ENCODE measurements at regions of chr11 and their contacts with region 1.

Region 1: DNA sequence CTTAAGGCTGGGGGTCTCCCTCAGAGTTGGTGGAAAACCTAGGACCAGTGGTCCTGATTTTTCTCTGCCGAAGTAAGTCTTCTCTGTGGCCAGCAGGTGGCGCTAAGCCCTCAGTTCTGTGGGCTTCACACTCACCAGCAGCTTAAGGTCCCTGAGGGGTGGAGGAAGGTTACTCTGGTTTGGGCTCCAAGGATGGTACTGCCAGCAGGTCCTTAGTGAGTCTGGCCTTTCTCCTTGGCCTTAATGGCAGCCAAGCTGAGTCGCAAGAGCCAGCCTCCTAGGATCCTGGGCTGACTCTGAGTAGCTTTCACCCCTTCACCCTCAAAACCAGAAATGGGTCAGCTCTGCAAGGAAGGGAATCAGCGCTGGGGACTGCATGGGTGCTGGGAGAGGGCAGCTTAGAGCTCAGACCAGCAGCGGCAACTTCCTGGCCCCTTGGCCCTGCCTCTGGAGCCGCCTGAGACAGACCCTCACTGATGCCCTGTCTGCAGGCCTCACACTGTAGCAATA is 4.4 kb downstream of the KCNJ11 start:
- DNase-seq: peak; percentile 67 to 70 (median 70)
- H3K4me3 ChIP-seq: no peak overlapping the region
- H3K4me3 Mint-ChIP-seq: no peak overlapping the region
- H3K27ac ChIP-seq: no peak overlapping the region
- H3K27ac Mint-ChIP-seq: peak overlapping the region in 1 of 7 donors; percentile 78
- H3K4me1 ChIP-seq: no peaks in the 10 kb centered on the region
- H3K4me1 Mint-ChIP-seq: no peaks in the 10 kb centered on the region
- H3K27me3 ChIP-seq: no peaks in the 10 kb centered on the region
- H3K27me3 Mint-ChIP-seq: no peaks in the 10 kb centered on the region

Region 2: DNA sequence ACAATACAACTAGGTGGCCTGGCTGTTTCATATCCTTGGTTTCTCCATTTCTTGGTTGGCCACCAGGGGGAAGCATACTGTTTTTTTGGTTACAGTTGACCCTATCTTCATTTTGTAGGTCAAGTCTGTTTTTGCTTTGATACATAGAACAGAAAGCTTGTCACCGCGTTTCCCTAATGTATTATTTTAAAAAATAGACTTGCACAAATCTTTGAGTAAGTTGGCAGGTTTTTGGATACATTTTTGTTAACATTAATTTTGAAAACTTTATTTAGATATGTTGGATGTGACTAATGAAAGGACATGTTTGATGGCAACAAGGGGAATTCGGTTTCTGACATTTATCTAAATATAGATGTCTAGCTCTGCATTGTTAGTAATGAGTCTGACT is 29.5 kb before region 1 on chr11:
- CTCF ChIA-PET with region 1: interaction called, 21 read pairs
- POLR2A ChIA-PET with region 1: interaction called, 4 read pairs
- intact Hi-C with region 1: loop called (anchors 2 kb)
- DNase-seq: peak; percentile 62 to 71 (median 65)
- H3K4me3 ChIP-seq: no peak overlapping the region
- H3K4me3 Mint-ChIP-seq: peak overlapping the region in 7 of 8 donors; percentile 74 to 98 (median 94)
- H3K27ac ChIP-seq: no peak overlapping the region
- H3K27ac Mint-ChIP-seq: peak overlapping the region in 5 of 7 donors; percentile 22 to 76 (median 64)
- H3K4me1 ChIP-seq: peaks cover 29% of the 10 kb centered on the region
- H3K4me1 Mint-ChIP-seq: peaks cover 17 to 44% (median 28%) of the 10 kb centered on the region in 4 donors
- H3K27me3 ChIP-seq: no peaks in the 10 kb centered on the region
- H3K27me3 Mint-ChIP-seq: peaks cover 0 to 1% of the 10 kb centered on the region in 2 donors

Region 3: GRCh38 chr11:17366495-17366894 is 17.6 kb before region 1 on chr11:
- CTCF ChIA-PET with region 1: interaction called, 15 read pairs
- POLR2A ChIA-PET with region 1: no interaction called
- intact Hi-C with region 1: no loop called
- DNase-seq: no peak
- H3K4me3 ChIP-seq: no peak overlapping the region
- H3K4me3 Mint-ChIP-seq: no peak overlapping the region
- H3K27ac ChIP-seq: no peak overlapping the region
- H3K27ac Mint-ChIP-seq: no peak overlapping the region
- H3K4me1 ChIP-seq: no peaks in the 10 kb centered on the region
- H3K4me1 Mint-ChIP-seq: no peaks in the 10 kb centered on the region
- H3K27me3 ChIP-seq: no peaks in the 10 kb centered on the region
- H3K27me3 Mint-ChIP-seq: no peaks in the 10 kb centered on the region

Region 4: GRCh38 chr11:17403982-17404759 is 20.1 kb after region 1 on chr11:
- CTCF ChIA-PET with region 1: interaction called, 13 read pairs
- POLR2A ChIA-PET with region 1: no interaction called
- intact Hi-C with region 1: no loop called
- DNase-seq: no peak
- H3K4me3 ChIP-seq: no peak overlapping the region
- H3K4me3 Mint-ChIP-seq: no peak overlapping the region
- H3K27ac ChIP-seq: no peak overlapping the region
- H3K27ac Mint-ChIP-seq: no peak overlapping the region
- H3K4me1 ChIP-seq: no peaks in the 10 kb centered on the region
- H3K4me1 Mint-ChIP-seq: no peaks in the 10 kb centered on the region
- H3K27me3 ChIP-seq: no peaks in the 10 kb centered on the region
- H3K27me3 Mint-ChIP-seq: no peaks in the 10 kb centered on the region

Region 5: GRCh38 chr11:17504330-17505107 is 120.5 kb after region 1 on chr11:
- CTCF ChIA-PET with region 1: interaction called, 98 read pairs
- POLR2A ChIA-PET with region 1: no interaction called
- intact Hi-C with region 1: loop called (anchors 1 kb)
- DNase-seq: peak; percentile 64 to 73 (median 71)
- H3K4me3 ChIP-seq: no peak overlapping the region
- H3K4me3 Mint-ChIP-seq: no peak overlapping the region
- H3K27ac ChIP-seq: no peak overlapping the region
- H3K27ac Mint-ChIP-seq: peak overlapping the region in 1 of 7 donors; percentile 47
- H3K4me1 ChIP-seq: no peaks in the 10 kb centered on the region
- H3K4me1 Mint-ChIP-seq: peaks cover 0 to 2% (median 0%) of the 10 kb centered on the region in 4 donors
- H3K27me3 ChIP-seq: no peaks in the 10 kb centered on the region
- H3K27me3 Mint-ChIP-seq: peaks cover 3 to 6% of the 10 kb centered on the region in 2 donors

Region 6: DNA sequence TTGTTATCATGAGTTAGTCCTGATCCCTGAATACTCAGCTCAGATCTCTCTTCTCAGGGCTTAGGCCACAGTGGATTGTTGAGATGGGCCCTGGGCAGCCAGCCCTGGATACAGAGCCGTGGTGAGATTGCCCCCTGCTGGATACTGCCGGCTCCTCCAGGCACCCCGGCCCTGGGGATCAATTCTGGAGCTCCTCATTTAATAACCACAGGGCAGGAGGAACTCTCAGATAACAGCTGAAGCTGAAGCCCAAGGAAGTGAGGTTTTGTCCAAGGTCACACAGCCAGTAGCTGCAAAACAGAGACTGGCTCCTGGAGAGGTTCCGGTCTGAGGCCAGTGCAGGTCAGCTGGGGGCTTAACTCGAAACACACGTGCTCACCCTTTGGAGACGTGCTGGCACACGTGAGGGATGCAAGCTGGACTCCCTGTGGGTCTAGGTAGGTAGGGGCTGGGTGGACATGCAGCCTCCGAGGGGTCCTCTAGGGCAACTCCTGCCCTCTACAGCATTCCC is 144.2 kb after region 1 on chr11:
- CTCF ChIA-PET with region 1: interaction called, 40 read pairs
- POLR2A ChIA-PET with region 1: no interaction called
- intact Hi-C with region 1: loop called (anchors 1 kb)
- DNase-seq: peak in 4 of 5 donors; percentile 21 to 31 (median 23)
- H3K4me3 ChIP-seq: no peak overlapping the region
- H3K4me3 Mint-ChIP-seq: no peak overlapping the region
- H3K27ac ChIP-seq: no peak overlapping the region
- H3K27ac Mint-ChIP-seq: no peak overlapping the region
- H3K4me1 ChIP-seq: no peaks in the 10 kb centered on the region
- H3K4me1 Mint-ChIP-seq: no peaks in the 10 kb centered on the region
- H3K27me3 ChIP-seq: no peaks in the 10 kb centered on the region
- H3K27me3 Mint-ChIP-seq: peaks cover 4 to 7% of the 10 kb centered on the region in 2 donors

Region 7: GRCh38 chr11:17978553-17979287 is 594.7 kb after region 1 on chr11:
- CTCF ChIA-PET with region 1: no interaction called
- POLR2A ChIA-PET with region 1: no interaction called
- intact Hi-C with region 1: loop called (anchors 10 kb)
- DNase-seq: no peak
- H3K4me3 ChIP-seq: no peak overlapping the region
- H3K4me3 Mint-ChIP-seq: no peak overlapping the region
- H3K27ac ChIP-seq: no peak overlapping the region
- H3K27ac Mint-ChIP-seq: no peak overlapping the region
- H3K4me1 ChIP-seq: no peaks in the 10 kb centered on the region
- H3K4me1 Mint-ChIP-seq: peaks cover 3 to 9% (median 3%) of the 10 kb centered on the region in 4 donors
- H3K27me3 ChIP-seq: no peaks in the 10 kb centered on the region
- H3K27me3 Mint-ChIP-seq: no peaks in the 10 kb centered on the region